CD8-positive, alpha-beta memory T cell (primary cell): ENCODE measurements at regions of chr1 and their contacts with region 1.

Region 1: DNA sequence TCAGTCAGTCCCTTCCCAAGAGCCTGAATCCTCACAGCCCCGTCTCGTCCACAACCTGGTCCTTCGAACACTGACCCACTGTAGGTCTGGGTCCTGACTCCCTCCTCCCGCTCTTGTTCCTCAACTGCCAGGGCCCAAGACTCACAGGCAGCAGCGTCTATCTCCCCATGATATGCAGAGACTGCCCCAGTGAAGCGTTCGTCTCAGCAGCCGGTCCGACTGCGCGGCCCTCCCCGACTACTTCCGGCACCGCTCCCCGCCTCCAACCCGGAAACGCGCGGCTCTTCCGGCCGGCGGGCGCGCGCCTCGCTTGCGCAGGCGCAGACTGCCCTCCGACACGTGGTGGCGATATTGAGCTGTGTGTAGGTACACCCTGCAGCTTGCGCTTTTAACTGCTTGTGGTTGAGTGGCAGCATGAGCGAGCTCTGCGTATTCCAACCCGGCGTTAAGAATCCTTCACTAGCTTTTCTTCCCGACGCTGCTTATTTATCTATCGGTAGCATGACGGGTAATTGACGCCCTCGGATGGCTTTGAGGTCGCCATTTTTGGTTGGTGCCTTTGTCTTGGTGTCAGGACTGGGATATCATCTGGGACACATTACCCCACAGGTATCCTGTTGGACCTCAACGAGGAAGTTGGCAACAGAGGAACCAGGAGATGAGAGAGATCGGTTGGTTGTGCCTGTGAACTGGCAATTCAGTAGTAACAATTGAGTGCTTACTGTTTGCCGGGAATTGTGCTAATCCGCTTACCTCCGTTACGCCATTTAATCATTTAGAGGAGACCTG is at the start of gene TAF12:
- DNase-seq: peak; percentile 86 to 95 (median 89)
- H3K4me3 ChIP-seq: peak within 1 kb of the TSS; percentile 98
- H3K4me3 Mint-ChIP-seq: peak within 1 kb of the TSS; percentile 94 to 99 (median 98)
- H3K27ac ChIP-seq: peak within 1 kb of the TSS; percentile 91
- H3K27ac Mint-ChIP-seq: peak within 1 kb of the TSS; percentile 91 to 100 (median 98)
- H3K4me1 ChIP-seq: peaks cover 40% of the 10 kb centered on the region
- H3K4me1 Mint-ChIP-seq: peaks cover 46 to 67% (median 56%) of the 10 kb centered on the region in 3 donors
- H3K27me3 ChIP-seq: no peaks in the 10 kb centered on the region
- H3K27me3 Mint-ChIP-seq: peaks cover 0 to 4% of the 10 kb centered on the region in 2 donors
- total RNA-seq, gene TAF12: 37.8 to 39.0 TPM

Region 2: DNA sequence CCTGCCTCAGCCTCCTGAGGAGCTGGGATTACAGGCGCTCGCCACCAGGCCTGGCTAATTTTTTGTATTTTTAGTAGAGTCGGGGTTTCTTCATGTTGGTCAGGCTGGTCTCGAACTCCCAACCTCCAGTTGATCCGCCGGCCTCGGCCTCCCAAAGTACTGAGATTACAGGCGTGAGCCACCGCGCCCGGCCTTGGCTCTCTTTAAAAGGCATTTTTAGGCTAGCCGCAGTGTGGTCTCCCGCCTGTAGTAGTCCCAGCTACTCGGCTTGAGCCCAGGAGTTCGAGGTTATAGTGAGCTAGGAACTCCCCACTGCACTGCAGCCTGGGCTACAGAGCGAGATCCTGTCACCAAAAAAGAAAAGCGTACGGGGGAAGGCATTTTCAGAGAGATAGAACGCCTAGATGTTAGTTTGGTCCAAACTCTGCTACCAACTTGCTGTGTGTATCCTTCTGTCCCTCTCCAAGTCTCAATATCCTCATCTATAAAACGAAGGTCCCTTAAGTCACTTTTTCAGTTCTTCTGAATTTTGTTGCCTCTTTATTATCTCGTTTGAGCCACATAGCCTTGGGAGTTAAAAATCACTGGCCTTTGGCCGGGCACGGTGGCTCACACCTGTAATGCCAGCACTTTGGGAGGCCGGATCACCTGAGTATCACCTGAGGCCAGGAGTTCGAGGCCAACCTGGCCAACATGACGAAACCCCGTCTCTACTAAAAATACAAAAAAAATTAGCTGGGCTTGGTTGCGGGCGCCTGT is 313.5 kb before region 1 on chr1:
- CTCF ChIA-PET with region 1: no interaction called
- POLR2A ChIA-PET with region 1: interaction called, 10 read pairs
- DNase-seq: no peak
- H3K4me3 ChIP-seq: peak overlapping the region; percentile 85
- H3K4me3 Mint-ChIP-seq: peak overlapping the region; percentile 89 to 97 (median 91)
- H3K27ac ChIP-seq: peak overlapping the region; percentile 93
- H3K27ac Mint-ChIP-seq: peak overlapping the region; percentile 95 to 99 (median 98)
- H3K4me1 ChIP-seq: peaks cover 17% of the 10 kb centered on the region
- H3K4me1 Mint-ChIP-seq: peaks cover 26 to 42% (median 42%) of the 10 kb centered on the region in 3 donors
- H3K27me3 ChIP-seq: no peaks in the 10 kb centered on the region
- H3K27me3 Mint-ChIP-seq: peaks cover 0 to 5% of the 10 kb centered on the region in 2 donors

Region 3: DNA sequence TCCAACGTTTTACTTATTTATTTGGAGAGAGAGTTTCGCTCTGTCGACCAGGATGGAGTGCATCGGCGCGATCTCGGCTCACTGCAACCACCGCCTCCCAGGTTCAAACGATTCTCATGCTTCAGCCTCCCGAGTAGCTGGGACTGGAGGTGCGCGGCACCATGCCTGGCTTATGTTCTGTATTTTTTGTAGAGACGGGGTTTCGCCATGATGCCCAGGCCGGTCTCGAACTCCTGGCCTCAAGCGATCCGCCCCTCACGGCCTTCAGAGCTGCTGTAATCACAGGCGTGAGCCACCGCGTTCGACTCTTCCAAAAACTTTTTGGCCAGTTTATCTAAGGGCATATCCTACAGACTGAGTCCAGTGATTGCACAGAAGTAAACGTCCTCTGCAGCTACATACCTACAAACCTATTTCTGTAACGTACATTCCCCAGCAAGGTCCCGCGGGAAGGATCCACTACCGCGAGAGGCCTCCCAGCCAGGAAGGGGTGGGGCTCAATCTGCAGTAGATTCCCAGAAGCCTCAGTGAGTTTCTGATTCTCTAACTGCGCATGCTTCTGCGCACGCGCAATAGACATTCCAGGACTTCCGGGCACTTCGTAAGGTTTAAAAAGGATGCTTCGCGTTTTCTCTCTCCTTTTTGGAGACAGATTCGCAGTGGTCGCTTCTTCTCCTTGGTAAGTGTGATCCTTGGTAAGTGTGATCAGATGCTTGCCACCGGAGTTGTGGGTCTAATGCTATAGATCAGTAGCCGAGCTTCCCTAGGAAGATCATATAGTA is 137.4 kb before region 1 on chr1 and contains the start of gene RCC1:
- CTCF ChIA-PET with region 1: interaction called, 12 read pairs
- POLR2A ChIA-PET with region 1: interaction called, 5 read pairs
- DNase-seq: peak; percentile 90 to 98 (median 96)
- H3K4me3 ChIP-seq: peak within 1 kb of the TSS; percentile 99
- H3K4me3 Mint-ChIP-seq: peak within 1 kb of the TSS; percentile 93 to 99 (median 97)
- H3K27ac ChIP-seq: peak within 1 kb of the TSS; percentile 90
- H3K27ac Mint-ChIP-seq: peak within 1 kb of the TSS; percentile 89 to 99 (median 96)
- H3K4me1 ChIP-seq: peaks cover 41% of the 10 kb centered on the region
- H3K4me1 Mint-ChIP-seq: peaks cover 40 to 49% (median 49%) of the 10 kb centered on the region in 3 donors
- H3K27me3 ChIP-seq: no peaks in the 10 kb centered on the region
- H3K27me3 Mint-ChIP-seq: peaks cover 0 to 6% of the 10 kb centered on the region in 2 donors
- total RNA-seq, gene RCC1: 115 to 116 TPM

Region 4: GRCh38 chr1:28668191-28668955 is 25.3 kb after region 1 on chr1 and contains the start of gene GMEB1:
- CTCF ChIA-PET with region 1: interaction called, 31 read pairs
- POLR2A ChIA-PET with region 1: interaction called, 83 read pairs
- DNase-seq: peak; percentile 76 to 90 (median 82)
- H3K4me3 ChIP-seq: peak within 1 kb of the TSS; percentile 93
- H3K4me3 Mint-ChIP-seq: peak within 1 kb of the TSS; percentile 92 to 97 (median 95)
- H3K27ac ChIP-seq: peak within 1 kb of the TSS; percentile 94
- H3K27ac Mint-ChIP-seq: peak within 1 kb of the TSS; percentile 97 to 100 (median 99)
- H3K4me1 ChIP-seq: peaks cover 5% of the 10 kb centered on the region
- H3K4me1 Mint-ChIP-seq: peaks cover 17 to 30% (median 23%) of the 10 kb centered on the region in 3 donors
- H3K27me3 ChIP-seq: no peaks in the 10 kb centered on the region
- H3K27me3 Mint-ChIP-seq: peaks cover 0 to 1% of the 10 kb centered on the region in 2 donors
- total RNA-seq, gene GMEB1: 21.3 to 21.8 TPM

Region 5: DNA sequence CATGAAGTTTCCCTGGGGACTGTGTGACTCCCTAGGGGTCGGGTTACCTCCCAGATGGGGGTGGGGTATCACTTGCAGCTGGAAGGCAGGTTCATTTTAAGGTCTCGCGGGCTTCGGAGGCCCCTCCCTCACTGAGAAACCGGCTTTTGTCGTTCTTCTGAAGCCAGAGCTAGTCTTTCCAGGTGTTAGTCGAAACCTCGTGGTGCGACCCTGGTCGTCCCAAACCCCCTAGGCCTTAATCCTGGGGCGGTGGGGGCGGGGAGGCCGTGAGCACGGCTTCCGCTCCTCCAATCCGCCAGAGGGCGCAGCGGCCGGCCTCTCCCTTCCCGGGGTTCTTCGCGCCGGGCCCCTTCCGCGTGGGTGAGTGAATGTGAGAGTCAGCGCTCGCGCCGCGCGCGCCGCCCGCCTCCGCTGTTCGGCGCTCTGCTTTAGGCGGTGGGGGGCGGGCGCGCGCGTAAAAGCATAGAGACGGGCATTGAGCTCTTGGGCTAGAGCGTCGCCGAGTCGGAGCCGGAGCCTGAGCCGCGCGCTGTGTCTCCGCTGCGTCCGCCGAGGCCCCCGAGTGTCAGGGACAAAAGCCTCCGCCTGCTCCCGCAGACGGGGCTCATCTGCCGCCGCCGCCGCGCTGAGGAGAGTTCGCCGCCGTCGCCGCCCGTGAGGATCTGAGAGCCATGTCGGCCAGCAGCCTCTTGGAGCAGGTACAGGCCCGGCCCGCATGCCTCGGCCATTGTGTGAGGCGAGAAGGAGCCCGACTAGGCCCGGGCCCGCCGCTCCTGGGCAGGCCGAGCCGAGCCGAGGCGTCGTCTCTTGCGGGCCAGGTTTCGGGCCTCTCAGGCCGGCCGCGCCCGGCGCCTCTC is 93.6 kb after region 1 on chr1 and contains the start of gene YTHDF2:
- CTCF ChIA-PET with region 1: interaction called, 40 read pairs
- POLR2A ChIA-PET with region 1: interaction called, 66 read pairs
- DNase-seq: peak; percentile 95 to 98 (median 97)
- H3K4me3 ChIP-seq: peak within 1 kb of the TSS; percentile 79
- H3K4me3 Mint-ChIP-seq: peak within 1 kb of the TSS; percentile 89 to 100 (median 97)
- H3K27ac ChIP-seq: peak within 1 kb of the TSS; percentile 94
- H3K27ac Mint-ChIP-seq: peak within 1 kb of the TSS; percentile 87 to 99 (median 96)
- H3K4me1 ChIP-seq: peaks cover 27% of the 10 kb centered on the region
- H3K4me1 Mint-ChIP-seq: peaks cover 33 to 46% (median 39%) of the 10 kb centered on the region in 3 donors
- H3K27me3 ChIP-seq: no peaks in the 10 kb centered on the region
- H3K27me3 Mint-ChIP-seq: peaks cover 0 to 3% of the 10 kb centered on the region in 2 donors
- total RNA-seq, gene YTHDF2: 98.3 to 105 TPM

Region 6: DNA sequence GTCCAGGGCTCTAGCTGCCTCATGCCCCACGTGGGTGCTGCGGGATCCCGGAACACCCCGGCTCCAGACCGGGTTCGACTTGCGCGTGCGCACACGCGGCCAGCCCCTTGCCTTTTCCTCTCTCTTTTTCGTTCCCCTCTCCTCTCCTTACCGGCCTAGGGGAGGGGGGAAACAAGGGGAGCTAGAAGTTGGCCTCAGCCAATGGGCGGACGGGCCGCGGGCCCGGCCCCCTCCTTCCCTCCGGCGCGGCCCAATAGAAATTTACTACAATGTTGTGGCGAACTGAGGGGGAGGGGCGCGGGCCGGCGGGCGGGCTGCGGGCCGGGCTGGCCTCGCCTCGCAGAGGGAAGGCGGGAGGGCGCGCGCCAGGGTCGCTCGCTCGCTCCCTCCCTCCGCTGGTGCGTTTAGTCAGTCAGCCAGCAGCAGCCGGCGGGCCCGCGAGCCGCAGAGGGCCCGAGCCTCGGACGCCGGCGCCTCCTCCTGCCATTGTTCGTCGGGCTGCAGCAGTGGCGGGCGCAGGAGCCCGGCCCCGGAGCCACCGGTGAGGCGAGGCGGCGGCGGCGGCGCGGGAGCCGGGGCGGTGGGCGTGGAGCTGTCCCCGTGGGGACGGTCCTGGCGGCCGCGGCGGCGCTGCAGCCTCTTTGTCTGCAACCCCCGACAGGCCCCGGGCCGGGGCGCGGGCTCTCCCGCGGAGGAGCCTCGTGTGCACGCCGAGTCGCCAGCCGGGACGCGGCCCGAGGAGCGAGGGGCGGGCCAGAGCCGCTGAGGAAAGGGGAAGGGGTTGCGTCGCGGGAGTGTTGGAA is 271.4 kb after region 1 on chr1 and contains the start of gene EPB41:
- CTCF ChIA-PET with region 1: no interaction called
- POLR2A ChIA-PET with region 1: interaction called, 12 read pairs
- DNase-seq: peak; percentile 86 to 91 (median 88)
- H3K4me3 ChIP-seq: peak within 1 kb of the TSS; percentile 98
- H3K4me3 Mint-ChIP-seq: peak within 1 kb of the TSS; percentile 97 to 100 (median 100)
- H3K27ac ChIP-seq: peak within 1 kb of the TSS; percentile 68
- H3K27ac Mint-ChIP-seq: peak within 1 kb of the TSS; percentile 89 to 97 (median 95)
- H3K4me1 ChIP-seq: peaks cover 47% of the 10 kb centered on the region
- H3K4me1 Mint-ChIP-seq: peaks cover 45 to 63% (median 46%) of the 10 kb centered on the region in 3 donors
- H3K27me3 ChIP-seq: no peaks in the 10 kb centered on the region
- H3K27me3 Mint-ChIP-seq: no peaks in the 10 kb centered on the region
- total RNA-seq, gene EPB41: 89.9 to 93.6 TPM